A673 (cell line): ENCODE measurements at regions of chr1 and their contacts with region 1.

Region 1: DNA sequence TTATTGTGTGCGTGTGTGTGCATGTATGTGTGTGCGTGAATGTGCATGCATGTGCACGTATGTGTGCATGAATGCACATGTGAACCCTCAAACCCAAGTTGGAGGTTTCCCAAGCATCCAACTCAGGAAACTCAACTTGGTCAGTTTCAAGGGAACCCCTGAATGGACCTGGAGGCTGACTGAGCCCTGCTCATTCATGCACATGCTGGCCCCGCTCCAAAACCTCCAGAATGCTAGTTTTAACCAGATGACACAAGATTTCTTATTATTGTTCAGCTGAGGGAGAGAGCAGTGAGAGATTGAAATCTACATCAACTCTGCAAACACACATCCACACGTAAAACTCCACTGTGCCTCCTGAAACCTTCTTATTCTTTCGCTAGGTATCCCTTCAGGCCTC is 104.4 kb downstream of the OMA1 start:
- DNase-seq: peak; percentile 94
- H3K4me3 ChIP-seq: no peak overlapping the region
- H3K27ac ChIP-seq: peak overlapping the region; percentile 74
- H3K4me1 ChIP-seq: peaks cover 56% of the 10 kb centered on the region
- H3K27me3 ChIP-seq: no peaks in the 10 kb centered on the region
- CTCF ChIP-seq: no peak

Region 2: DNA sequence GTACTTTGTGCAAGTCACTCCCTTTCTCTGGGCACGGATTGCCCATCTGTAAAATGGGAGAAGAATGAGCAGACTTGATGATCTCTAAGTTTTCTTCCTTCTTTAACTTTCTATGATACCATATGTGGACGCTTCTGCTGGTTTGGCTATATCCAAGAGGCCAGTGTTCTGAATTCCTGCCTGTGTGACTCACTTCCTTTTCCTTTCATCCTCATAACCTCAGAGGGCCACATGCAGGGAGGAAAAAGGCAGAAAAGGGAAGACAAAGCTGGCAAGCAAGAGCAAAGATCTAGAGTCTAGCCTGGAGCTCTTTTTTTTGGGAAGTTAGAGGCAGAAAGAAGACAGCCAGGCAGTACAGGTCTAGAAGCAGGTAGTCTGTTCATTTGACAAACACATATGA is 46.8 kb before region 1 on chr1:
- CTCF ChIA-PET with region 1: no interaction called
- POLR2A ChIA-PET with region 1: no interaction called
- intact Hi-C with region 1: loop called (anchors 2 kb)
- DNase-seq: peak; percentile 94
- H3K4me3 ChIP-seq: no peak overlapping the region
- H3K27ac ChIP-seq: peak overlapping the region; percentile 12
- H3K4me1 ChIP-seq: peaks cover 16% of the 10 kb centered on the region
- H3K27me3 ChIP-seq: no peaks in the 10 kb centered on the region
- CTCF ChIP-seq: no peak